Activated B cell treated with CpG ODN at 0.5 μM for 24 hours (primary cell): ENCODE measurements at regions of chr7 and their contacts with region 1.

Region 1: DNA sequence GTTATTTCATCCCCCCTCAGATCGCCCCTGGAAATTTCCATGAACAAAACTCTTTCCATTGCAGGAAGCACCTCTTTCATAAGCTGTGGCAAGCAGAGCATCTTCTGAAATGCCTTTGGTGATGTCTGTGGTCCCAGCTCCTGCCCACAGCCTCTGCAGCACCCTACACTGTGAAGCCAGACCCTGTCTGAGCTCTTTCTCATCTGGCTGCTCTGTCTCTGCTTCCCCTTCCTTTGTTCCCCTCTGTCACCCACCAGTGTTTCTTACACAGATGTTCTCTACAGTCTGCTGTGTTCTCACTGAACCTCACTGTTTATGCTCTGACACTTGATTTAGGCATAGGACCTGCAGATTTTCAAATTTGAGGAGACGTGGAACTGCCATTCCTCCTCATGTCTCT is 1.9 kb upstream of the TAS2R39 start:
- DNase-seq: no peak
- ATAC-seq: peak; percentile 91
- H3K4me3 Mint-ChIP-seq: no peak overlapping the region
- H3K27ac Mint-ChIP-seq: peak overlapping the region; percentile 42
- H3K4me1 Mint-ChIP-seq: peaks cover 43% of the 10 kb centered on the region
- H3K27me3 Mint-ChIP-seq: peaks cover 2% of the 10 kb centered on the region
- CTCF ChIP-seq: no peak

Region 2: DNA sequence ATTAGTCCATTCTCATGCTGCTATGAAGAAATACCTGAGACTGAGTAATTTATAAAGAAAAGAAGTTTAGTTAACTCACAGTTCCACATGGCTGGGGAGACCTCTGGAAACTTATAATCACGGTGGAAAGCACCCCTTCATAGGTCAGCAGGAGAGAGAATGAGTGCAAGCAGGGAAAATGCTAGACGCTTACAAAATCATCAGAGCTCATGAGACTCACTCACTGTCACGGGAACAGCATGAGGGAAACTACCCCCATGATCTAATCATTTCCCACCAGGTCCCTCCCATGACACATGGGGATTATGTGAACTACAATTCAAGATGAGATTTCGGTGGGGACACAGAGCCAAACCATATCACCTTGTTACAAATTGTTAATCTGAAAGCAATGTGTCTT is 17.7 kb after region 1 on chr7:
- CTCF ChIA-PET with region 1: no interaction called
- POLR2A ChIA-PET with region 1: interaction called, 3 read pairs
- intact Hi-C with region 1: loop called (anchors 1 kb)
- DNase-seq: no peak
- ATAC-seq: peak; percentile 68
- H3K4me3 Mint-ChIP-seq: no peak overlapping the region
- H3K27ac Mint-ChIP-seq: peak overlapping the region; percentile 54
- H3K4me1 Mint-ChIP-seq: peaks cover 10% of the 10 kb centered on the region
- H3K27me3 Mint-ChIP-seq: no peaks in the 10 kb centered on the region
- CTCF ChIP-seq: no peak

Region 3: GRCh38 chr7:143222782-143223181 is 41.4 kb after region 1 on chr7:
- CTCF ChIA-PET with region 1: no interaction called
- POLR2A ChIA-PET with region 1: no interaction called
- intact Hi-C with region 1: no loop called
- DNase-seq: no peak
- ATAC-seq: no peak
- H3K4me3 Mint-ChIP-seq: no peak overlapping the region
- H3K27ac Mint-ChIP-seq: no peak overlapping the region
- H3K4me1 Mint-ChIP-seq: no peaks in the 10 kb centered on the region
- H3K27me3 Mint-ChIP-seq: peaks cover 16% of the 10 kb centered on the region
- CTCF ChIP-seq: no peak